PC-9 (cell line): ENCODE measurements at regions of chr2 and their contacts with region 1.

Region 1: DNA sequence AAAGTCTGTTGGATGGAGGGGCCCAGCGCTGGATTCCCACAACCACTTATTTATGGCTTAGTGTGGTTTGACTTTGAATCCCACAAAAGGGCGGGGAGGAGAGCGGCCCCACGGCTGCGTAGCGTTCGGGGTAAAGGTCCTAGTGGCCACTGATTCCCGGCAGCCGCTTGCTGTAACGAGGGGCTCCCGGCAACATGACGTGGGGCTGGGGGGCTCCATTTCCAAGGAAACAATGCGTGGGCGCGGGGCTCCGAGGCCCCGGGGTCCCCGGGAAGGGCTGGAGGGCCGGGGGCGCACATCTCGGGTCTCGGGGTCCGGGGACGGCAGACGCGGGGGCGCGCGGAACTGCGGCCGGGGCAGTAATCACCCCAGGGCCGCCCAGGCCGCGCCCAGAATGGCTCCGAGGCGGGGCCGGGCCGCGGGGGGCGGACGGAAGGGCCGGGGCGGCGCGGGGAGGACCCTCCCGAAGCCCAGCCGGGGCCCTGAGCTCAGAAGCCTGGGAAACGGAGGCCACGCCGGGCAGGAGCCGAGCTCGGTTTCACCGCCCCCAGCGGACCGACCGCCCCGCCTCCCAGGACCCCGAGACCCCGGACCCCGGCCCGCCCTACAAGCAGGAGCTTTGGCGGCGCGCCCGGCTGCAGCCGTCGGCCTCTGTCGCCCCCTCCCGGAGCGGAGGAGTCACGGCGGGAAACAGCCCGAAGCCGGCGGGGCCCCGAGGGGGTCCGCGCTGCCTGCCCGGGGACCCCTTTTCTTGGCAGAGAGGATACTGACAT is 11.9 kb upstream of the MLPH start:
- DNase-seq: peak; percentile 53 to 90
- H3K4me3 ChIP-seq: peak overlapping the region; percentile 63
- H3K27ac ChIP-seq: peak overlapping the region; percentile 79
- H3K4me1 ChIP-seq: peaks cover 25% of the 10 kb centered on the region
- H3K27me3 ChIP-seq: no peaks in the 10 kb centered on the region
- CTCF ChIP-seq: peak; percentile 97

Region 2: GRCh38 chr2:237291138-237291792 is 183.9 kb before region 1 on chr2:
- CTCF ChIA-PET with region 1: no interaction called
- POLR2A ChIA-PET with region 1: no interaction called
- intact Hi-C with region 1: loop called (anchors 5 kb)
- DNase-seq: peak; percentile 89 to 93
- H3K4me3 ChIP-seq: peak overlapping the region; percentile 51; the same call in 1 of the 2 replicates
- H3K27ac ChIP-seq: peak overlapping the region; percentile 3; the same call in 1 of the 2 replicates
- H3K4me1 ChIP-seq: peaks cover 19% of the 10 kb centered on the region
- H3K27me3 ChIP-seq: no peaks in the 10 kb centered on the region
- CTCF ChIP-seq: no peak

Region 3: DNA sequence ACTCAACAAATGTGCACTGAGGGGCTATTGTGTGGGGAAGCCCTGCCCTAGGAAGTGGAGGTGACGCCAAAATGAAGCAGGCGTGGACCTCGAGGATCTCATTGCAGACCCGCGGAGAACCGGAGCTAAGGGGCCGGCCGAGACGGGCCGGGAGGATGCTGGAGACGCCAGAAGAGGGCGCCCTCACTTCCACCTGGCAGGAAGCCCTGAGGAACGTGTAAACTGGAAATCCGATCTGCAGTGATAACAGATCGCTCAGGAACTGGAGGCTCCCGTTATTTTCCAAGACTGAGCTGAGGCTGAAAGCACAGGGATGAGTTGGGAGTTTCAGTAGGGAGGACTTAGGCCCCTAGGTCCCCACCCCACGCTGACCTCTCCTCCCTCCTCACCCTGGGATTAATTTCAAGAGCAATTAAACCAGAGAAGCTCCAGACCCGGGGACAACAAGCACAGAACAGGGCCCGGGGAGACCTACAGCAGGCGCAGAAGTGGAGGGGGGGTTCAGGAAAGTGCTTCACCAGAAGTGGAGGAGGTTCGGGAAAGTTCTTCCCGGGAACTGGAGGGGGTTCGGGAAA is 53.5 kb before region 1 on chr2:
- CTCF ChIA-PET with region 1: interaction called, 15 read pairs
- POLR2A ChIA-PET with region 1: interaction called, 4 read pairs
- intact Hi-C with region 1: loop called (anchors 1 kb)
- DNase-seq: peak; percentile 62 to 87
- H3K4me3 ChIP-seq: peak overlapping the region; percentile 32; the same call in 1 of the 2 replicates
- H3K27ac ChIP-seq: no peak overlapping the region
- H3K4me1 ChIP-seq: no peaks in the 10 kb centered on the region; the same call in 1 of the 2 replicates
- H3K27me3 ChIP-seq: no peaks in the 10 kb centered on the region
- CTCF ChIP-seq: peak; percentile 91

Region 4: DNA sequence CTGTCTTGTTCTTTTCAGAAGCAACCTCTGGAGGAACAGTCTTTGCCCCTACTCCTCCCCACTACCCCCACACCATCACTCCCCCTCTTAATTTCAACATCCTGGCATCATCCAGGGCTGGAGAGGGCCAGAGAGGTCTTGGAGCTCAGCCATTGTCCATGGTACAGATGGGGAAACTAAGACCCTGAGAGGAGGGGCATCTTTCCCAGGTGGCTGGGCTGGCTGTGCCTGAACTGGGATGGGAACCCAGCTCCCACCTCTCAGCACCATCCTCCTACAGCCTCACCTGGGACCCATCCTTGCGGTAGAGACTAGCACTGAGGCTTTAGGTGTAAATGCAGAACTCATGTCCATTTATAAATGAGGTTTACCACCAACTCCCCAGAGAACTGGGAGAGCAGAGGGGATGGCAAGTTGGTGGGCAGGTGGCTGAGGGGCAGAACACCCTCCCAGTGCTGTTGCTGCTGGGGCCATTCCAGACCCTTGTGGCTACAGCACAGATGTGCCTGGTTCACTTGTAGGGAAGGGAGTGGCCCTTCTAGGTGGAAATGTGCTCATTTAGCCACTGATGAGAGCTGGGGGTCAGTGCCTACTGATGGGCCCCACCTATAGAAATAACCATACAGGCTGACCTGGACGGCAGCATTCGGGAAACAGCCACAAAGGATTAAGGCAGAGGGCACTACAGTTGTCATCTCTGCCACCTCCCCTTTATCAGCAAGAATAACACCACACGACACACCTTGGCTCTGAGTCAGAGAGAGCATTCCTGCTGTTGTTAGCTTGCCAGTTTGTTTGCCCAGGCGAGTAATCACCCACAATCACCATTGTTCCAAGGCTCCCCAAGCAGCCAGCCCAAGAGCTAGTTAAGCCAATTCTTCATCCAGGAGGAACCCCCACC is 14.0 kb after region 1 on chr2:
- CTCF ChIA-PET with region 1: interaction called, 19 read pairs
- POLR2A ChIA-PET with region 1: interaction called, 11 read pairs
- intact Hi-C with region 1: loop called (anchors 1 kb)
- DNase-seq: peak; percentile 90 to 98
- H3K4me3 ChIP-seq: peak overlapping the region; percentile 70
- H3K27ac ChIP-seq: peak overlapping the region; percentile 99
- H3K4me1 ChIP-seq: peaks cover 68% of the 10 kb centered on the region
- H3K27me3 ChIP-seq: no peaks in the 10 kb centered on the region
- CTCF ChIP-seq: no peak